Ovary (tissue), 10 donors: ENCODE measurements at regions of chr13 and their contacts with region 1.

Region 1: GRCh38 chr13:34076943-34077703 is 259.2 kb downstream of the RFC3 start:
- DNase-seq: no peak
- H3K4me3 ChIP-seq: no peak overlapping the region
- H3K27ac ChIP-seq: no peak overlapping the region
- H3K4me1 ChIP-seq: peaks cover 2% of the 10 kb centered on the region
- H3K27me3 ChIP-seq: no peaks in the 10 kb centered on the region
- CTCF ChIP-seq: peak in 2 of 3 donors; percentile 22 to 32
- EP300 ChIP-seq: no peak
- POLR2A ChIP-seq: no peak

Region 2: GRCh38 chr13:33799950-33800592 is 277.1 kb before region 1 on chr13:
- intact Hi-C with region 1: loop called in 1 of 4 experiments (anchors 10 kb)
- DNase-seq: no peak
- H3K4me3 ChIP-seq: no peak overlapping the region
- H3K27ac ChIP-seq: no peak overlapping the region
- H3K4me1 ChIP-seq: no peaks in the 10 kb centered on the region
- H3K27me3 ChIP-seq: no peaks in the 10 kb centered on the region
- CTCF ChIP-seq: no peak
- EP300 ChIP-seq: no peak
- POLR2A ChIP-seq: no peak

Region 3: DNA sequence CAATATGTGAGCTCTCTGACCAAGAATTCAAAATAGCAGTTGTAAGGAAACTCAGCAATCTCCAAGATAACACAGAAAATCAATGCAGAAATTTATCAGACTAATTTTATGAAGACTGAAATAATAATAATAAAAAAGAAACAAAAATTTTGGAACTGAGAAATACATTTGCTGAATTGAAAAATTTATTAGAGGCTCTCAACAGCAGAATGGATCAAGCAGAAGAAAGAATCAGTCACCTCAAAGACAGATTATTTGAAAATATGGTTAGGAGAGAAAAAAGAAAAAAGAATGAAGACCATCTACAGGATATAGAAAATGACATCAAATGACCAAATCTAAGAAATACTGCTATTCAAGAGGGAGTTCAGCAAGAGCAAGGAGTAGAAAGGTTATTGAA is 183.6 kb before region 1 on chr13:
- intact Hi-C with region 1: no loop called
- DNase-seq: no peak
- H3K4me3 ChIP-seq: no peak overlapping the region
- H3K27ac ChIP-seq: no peak overlapping the region
- H3K4me1 ChIP-seq: no peaks in the 10 kb centered on the region
- H3K27me3 ChIP-seq: no peaks in the 10 kb centered on the region
- CTCF ChIP-seq: no peak
- EP300 ChIP-seq: no peak
- POLR2A ChIP-seq: no peak

Region 4: DNA sequence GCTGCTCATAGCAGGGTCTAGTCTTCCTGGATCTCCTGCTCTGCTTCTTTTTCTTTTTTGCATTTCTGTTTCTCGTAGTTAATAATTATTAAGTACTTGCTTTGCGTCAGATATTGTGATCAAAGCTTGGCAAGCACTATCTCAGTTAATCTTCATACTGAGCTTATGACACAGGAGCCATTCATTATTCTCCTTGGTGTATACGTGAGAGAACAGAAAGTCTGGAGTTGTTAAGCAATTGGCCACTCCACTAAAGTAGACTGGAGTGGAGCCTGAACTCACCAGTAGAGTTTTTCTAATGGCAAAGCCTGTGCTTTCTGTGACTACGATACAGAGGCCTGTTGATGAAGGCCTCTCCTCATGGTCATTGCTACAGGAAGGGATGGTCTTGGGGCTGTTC is 26.7 kb after region 1 on chr13:
- intact Hi-C with region 1: loop called in 1 of 4 experiments (anchors 2 kb)
- DNase-seq: no peak
- H3K4me3 ChIP-seq: no peak overlapping the region
- H3K27ac ChIP-seq: no peak overlapping the region
- H3K4me1 ChIP-seq: no peaks in the 10 kb centered on the region
- H3K27me3 ChIP-seq: no peaks in the 10 kb centered on the region
- CTCF ChIP-seq: no peak
- EP300 ChIP-seq: no peak
- POLR2A ChIP-seq: no peak